Lower leg skin (tissue), 4 donors: ENCODE measurements at regions of chr1 and their contacts with region 1.

Region 1: GRCh38 chr1:33055210-33056008 is 18.7 kb upstream of the AK2 start:
- DNase-seq: peak; percentile 45 to 87
- H3K4me3 ChIP-seq: no peak overlapping the region
- CTCF ChIP-seq: no peak
- POLR2A ChIP-seq: no peak

Region 2: GRCh38 chr1:32925403-32926162 is 129.8 kb before region 1 on chr1:
- intact Hi-C with region 1: loop called (anchors 10 kb)
- DNase-seq: no peak
- H3K4me3 ChIP-seq: no peak overlapping the region
- CTCF ChIP-seq: no peak
- POLR2A ChIP-seq: no peak

Region 3: DNA sequence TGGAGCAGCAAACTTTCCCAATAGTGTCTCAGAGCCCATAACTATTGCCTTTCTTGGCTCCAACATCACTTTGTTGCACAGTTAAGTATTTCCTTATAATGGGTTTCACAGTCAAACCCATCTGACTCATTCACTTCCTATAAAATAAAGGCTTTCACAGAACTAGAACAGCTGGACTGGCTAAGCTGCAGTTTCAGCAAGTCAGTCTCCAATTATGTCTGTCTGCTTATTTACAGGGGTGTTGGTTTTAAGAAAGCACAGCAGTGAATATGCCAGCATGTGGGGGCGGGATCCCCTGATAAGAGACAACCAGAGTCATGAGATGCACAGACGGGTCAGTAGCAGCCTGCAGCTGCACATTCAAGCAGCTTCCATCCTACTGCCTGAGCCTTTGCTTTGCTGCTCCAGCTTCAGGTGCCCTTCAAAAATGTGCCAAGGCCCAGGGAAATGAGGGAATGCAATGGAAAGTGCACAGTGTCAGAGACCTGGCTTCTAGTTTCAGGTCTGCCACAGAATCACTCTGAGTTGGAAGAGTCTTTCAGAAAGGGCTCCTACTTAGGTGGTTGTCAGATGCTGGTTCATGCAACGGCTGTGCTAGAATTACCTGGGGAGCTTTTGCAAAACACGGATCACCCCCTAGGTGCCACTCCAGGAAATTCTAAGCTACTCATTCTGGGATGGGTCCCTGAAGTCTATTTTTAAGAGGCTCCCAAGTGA is 115.6 kb before region 1 on chr1:
- intact Hi-C with region 1: no loop called
- DNase-seq: no peak
- H3K4me3 ChIP-seq: no peak overlapping the region
- CTCF ChIP-seq: no peak
- POLR2A ChIP-seq: no peak